BJ (cell line): ENCODE measurements at regions of chr18 and their contacts with region 1.

Region 1: DNA sequence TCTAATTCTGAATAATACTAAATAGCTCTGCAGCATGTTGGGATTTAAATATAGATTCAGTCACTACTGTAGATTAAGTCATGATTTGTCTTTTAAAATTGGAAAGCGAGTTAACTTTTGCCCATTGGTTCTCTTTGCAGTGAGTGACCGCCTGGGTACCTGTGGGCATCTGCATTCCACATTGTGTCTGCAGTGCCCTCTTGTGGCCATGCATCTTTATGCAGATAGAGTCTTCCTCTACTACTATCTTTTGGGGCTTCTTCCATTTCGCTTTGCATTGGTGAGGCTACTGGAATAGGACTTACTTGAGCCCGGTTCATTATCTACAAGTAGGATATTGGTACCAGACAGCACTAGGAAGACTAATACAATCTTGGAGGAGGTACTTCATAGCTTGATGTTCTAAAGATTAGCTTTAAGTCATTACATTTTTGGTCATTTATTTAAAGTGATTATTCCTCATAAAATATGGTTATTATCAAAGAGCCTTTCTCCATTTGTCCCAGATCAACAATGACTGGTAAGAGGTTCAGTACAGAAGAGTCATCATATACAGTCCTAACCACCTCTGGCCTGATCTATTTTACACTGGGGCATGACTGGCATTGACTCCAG is 203.0 kb downstream of the SOCS6 start:
- DNase-seq: no peak
- H3K4me3 ChIP-seq: no peak overlapping the region
- H3K27me3 ChIP-seq: peaks cover 3% of the 10 kb centered on the region; the same call in 1 of the 2 replicates
- CTCF ChIP-seq: peak; percentile 89

Region 2: DNA sequence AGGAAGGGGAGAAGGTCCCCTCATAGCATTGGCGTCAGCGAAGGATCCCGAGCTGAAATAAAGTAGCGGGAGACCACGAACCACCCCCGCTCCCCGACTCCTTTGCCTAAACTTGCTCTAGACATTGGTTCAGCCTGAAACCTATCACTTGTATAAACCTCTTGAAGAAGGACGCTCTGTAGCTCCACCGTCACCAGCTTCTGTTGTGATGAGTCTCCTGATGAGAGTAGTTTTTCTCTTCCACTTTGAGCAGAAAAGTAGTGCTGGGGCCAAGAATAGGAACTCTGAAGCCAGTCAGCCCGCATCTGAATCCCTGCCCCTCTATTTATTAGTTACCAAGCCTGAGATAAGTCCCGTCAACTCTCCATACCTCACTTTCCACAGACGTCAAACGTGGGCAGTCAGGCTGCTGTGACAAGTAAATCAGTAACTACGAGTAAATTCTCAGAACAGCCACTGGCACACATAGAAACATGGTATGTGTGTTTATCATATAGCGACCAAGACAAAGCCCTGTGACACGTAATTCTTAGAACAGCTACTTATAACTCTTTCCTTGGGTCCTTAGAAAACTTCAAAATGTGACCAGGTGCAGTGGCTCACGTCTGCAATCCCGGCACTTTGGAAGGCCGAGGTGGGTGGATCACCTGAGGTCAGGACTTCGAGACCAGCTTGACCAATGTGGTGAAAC is 605.9 kb before region 1 on chr18:
- CTCF ChIA-PET with region 1: no interaction called
- POLR2A ChIA-PET with region 1: no interaction called
- DNase-seq: no peak
- H3K4me3 ChIP-seq: no peak overlapping the region
- H3K27me3 ChIP-seq: no peaks in the 10 kb centered on the region
- CTCF ChIP-seq: no peak

Region 3: GRCh38 chr18:70442933-70443332 is 48.9 kb before region 1 on chr18:
- CTCF ChIA-PET with region 1: no interaction called
- POLR2A ChIA-PET with region 1: no interaction called
- DNase-seq: no peak
- H3K4me3 ChIP-seq: no peak overlapping the region
- H3K27me3 ChIP-seq: no peaks in the 10 kb centered on the region
- CTCF ChIP-seq: no peak

Region 4: GRCh38 chr18:70469916-70470315 is 21.9 kb before region 1 on chr18:
- CTCF ChIA-PET with region 1: interaction called, 12 read pairs
- POLR2A ChIA-PET with region 1: no interaction called
- DNase-seq: no peak
- H3K4me3 ChIP-seq: no peak overlapping the region
- H3K27me3 ChIP-seq: no peaks in the 10 kb centered on the region
- CTCF ChIP-seq: no peak

Region 5: GRCh38 chr18:70506511-70506910 is 14.7 kb after region 1 on chr18:
- CTCF ChIA-PET with region 1: interaction called, 26 read pairs
- POLR2A ChIA-PET with region 1: no interaction called
- DNase-seq: no peak
- H3K4me3 ChIP-seq: no peak overlapping the region
- H3K27me3 ChIP-seq: no peaks in the 10 kb centered on the region; the same call in 1 of the 2 replicates
- CTCF ChIP-seq: no peak

Region 6: DNA sequence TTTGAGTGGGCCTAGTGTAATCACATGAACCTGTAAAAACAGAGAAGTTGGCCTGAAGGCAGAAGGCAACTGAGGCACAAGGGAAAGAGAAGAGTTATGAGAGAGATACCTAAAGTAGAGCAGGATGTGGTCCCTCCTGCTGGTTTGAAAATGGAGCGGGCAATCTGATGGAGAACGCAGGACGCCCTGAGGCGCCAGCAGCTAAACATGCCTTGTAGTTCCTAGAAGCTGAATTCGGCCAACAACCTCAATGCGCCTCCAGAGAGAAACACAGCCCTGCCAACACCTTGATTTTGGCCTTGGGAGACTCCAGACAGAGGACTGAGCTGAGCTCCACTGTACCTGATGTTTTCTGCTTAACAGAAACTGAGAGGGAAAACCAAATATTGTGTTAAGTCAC is 266.9 kb after region 1 on chr18:
- CTCF ChIA-PET with region 1: no interaction called
- POLR2A ChIA-PET with region 1: no interaction called
- DNase-seq: no peak
- H3K4me3 ChIP-seq: no peak overlapping the region
- H3K27me3 ChIP-seq: no peaks in the 10 kb centered on the region
- CTCF ChIP-seq: no peak